K562 (cell line): ENCODE measurements at regions of chr15 and their contacts with region 1.

Region 1: GRCh38 chr15:29815000-29815710 is 7.1 kb downstream of the TJP1 start:
- DNase-seq: peak; percentile 22 to 81 (median 36)
- ATAC-seq: peak; percentile 97
- H3K4me3 ChIP-seq: no peak overlapping the region
- H3K27ac ChIP-seq: peak overlapping the region; percentile 74; the same call in 2 of the 3 replicates
- H3K4me1 ChIP-seq: peaks cover 0 to 18% of the 10 kb centered on the region in 2 experiments; a peak in 3 of 5 replicates
- H3K27me3 ChIP-seq: no peaks in the 10 kb centered on the region
- CTCF ChIP-seq: no peak
- EP300 ChIP-seq: 0 out of 2 replicates have a peak, but pooled peaks have one; percentile 14
- POLR2A ChIP-seq: no peak
- RAD21 ChIP-seq: no peak

Region 2: GRCh38 chr15:29835301-29835700 is 20.1 kb after region 1 on chr15:
- CTCF ChIA-PET with region 1: no interaction called
- POLR2A ChIA-PET with region 1: no interaction called
- in situ Hi-C with region 1: no loop called
- intact Hi-C with region 1: loop called (anchors 1 kb)
- DNase-seq: no peak
- ATAC-seq: no peak
- H3K4me3 ChIP-seq: no peak overlapping the region
- H3K27ac ChIP-seq: no peak overlapping the region
- H3K4me1 ChIP-seq: no peaks in the 10 kb centered on the region
- H3K27me3 ChIP-seq: peaks cover 4 to 23% of the 10 kb centered on the region in 2 experiments; a peak in 3 of 5 replicates
- CTCF ChIP-seq: no peak
- EP300 ChIP-seq: no peak
- POLR2A ChIP-seq: no peak
- RAD21 ChIP-seq: no peak